ENCODE measurements at regions of chr10 and their contacts with region 1.

Region 1: DNA sequence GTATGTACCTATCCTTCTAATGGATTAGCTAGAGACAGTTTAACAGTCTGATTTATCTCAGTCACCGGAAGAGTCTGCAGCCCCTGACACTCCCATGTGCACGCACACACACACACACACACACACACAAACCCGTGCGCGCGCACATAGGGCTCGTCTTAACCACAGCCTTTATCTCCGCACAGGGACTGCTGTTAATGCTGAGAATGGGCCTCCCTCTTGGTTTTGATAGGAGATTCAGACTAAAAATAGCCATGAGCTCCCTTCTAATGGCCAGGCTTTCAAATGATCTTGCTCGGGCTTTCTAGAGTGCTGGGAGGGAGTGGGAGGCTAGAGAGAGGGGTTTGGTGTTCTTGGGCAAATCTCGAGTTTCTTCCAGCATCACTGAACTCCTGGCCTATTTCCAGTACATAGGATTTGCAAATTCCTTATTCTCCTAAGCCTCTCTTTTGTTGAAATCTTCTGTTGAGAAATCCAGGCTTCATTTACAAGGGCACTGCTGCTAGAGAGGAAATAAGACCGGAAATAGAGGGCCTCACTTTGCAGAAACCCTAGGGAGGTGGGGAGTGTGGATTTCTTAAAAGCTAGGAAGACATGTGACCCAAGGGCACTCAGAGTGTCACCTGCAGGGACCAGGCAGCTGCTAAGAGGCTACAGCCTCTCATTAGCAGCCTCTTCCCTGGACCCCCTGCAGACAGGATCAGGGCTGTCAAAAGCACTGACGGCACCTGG is 2.4 kb downstream of the TMEM72 start:
- DNase-seq: peak in 8 of 9 donors; percentile 19 to 75 (median 58)
- ATAC-seq: peak; percentile 83
- H3K4me3 ChIP-seq: no peak overlapping the region
- H3K4me3 Mint-ChIP-seq: peak overlapping the region; percentile 64 to 83 (median 76)
- H3K27ac ChIP-seq: no peak overlapping the region
- H3K27ac Mint-ChIP-seq: peak overlapping the region; percentile 77 to 90 (median 87)
- H3K4me1 ChIP-seq: peaks cover 0 to 21% of the 10 kb centered on the region in 2 donors
- H3K4me1 Mint-ChIP-seq: peaks cover 12 to 28% (median 23%) of the 10 kb centered on the region in 7 donors
- H3K27me3 ChIP-seq: no peaks in the 10 kb centered on the region
- H3K27me3 Mint-ChIP-seq: peaks cover 0 to 13% (median 5%) of the 10 kb centered on the region in 5 donors

Region 2: DNA sequence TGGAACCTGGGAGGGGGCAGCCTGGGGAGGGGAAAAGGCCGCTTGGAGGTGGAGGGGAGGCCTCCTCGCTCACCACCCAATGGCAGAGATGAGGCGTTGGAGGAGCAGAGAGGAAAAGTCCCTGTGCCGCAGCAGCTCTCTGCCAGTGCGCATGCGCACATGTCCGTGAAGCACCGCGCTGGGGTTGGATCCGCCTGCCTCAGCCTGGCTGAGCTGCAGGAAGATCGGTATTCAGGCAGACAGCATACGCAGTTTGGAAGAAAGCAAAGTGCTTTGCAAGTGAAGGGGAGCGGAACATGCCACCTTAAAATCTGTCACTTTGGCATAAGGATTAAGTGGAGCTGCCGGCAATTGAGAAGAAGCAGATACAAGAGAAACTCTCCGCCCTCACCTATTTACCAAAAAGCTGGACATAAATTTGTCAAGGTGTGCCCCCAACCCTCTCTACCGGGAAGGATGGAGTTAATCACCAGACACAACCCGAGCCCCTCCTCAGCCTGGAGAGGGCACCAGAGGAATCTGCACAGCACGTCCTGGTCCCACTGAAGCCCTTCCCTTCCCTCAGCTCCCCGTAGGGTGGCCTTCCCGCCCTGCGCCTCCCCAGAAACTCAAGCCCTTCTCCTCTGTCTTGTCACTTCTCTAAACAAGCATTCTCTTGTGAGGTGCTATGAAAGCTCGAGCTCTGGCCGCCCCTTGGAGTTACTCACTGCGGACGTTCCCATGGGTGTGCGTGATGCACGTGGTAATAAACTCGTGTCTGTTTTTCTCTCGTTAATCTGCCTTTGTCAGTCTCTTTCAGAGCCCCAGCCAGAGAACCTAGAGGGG is 34.6 kb before region 1 on chr10:
- CTCF ChIA-PET with region 1: no interaction called
- POLR2A ChIA-PET with region 1: interaction called, 8 read pairs
- intact Hi-C with region 1: loop called in 1 of 2 experiments (anchors 2 kb)
- DNase-seq: peak; percentile 63 to 85 (median 81)
- ATAC-seq: peak; percentile 83
- H3K4me3 ChIP-seq: peak overlapping the region; percentile 60
- H3K4me3 Mint-ChIP-seq: peak overlapping the region; percentile 81 to 99 (median 93)
- H3K27ac ChIP-seq: peak overlapping the region; percentile 39
- H3K27ac Mint-ChIP-seq: peak overlapping the region; percentile 56 to 93 (median 88)
- H3K4me1 ChIP-seq: peaks cover 0 to 10% of the 10 kb centered on the region in 2 donors
- H3K4me1 Mint-ChIP-seq: peaks cover 5 to 19% (median 16%) of the 10 kb centered on the region in 7 donors
- H3K27me3 ChIP-seq: no peaks in the 10 kb centered on the region
- H3K27me3 Mint-ChIP-seq: peaks cover 0 to 16% (median 0%) of the 10 kb centered on the region in 5 donors

Region 3: GRCh38 chr10:45198596-45199379 is 285.3 kb after region 1 on chr10:
- CTCF ChIA-PET with region 1: no interaction called
- POLR2A ChIA-PET with region 1: no interaction called
- intact Hi-C with region 1: no loop called
- DNase-seq: no peak
- ATAC-seq: no peak
- H3K4me3 ChIP-seq: no peak overlapping the region
- H3K4me3 Mint-ChIP-seq: no peak overlapping the region
- H3K27ac ChIP-seq: no peak overlapping the region
- H3K27ac Mint-ChIP-seq: no peak overlapping the region
- H3K4me1 ChIP-seq: no peaks in the 10 kb centered on the region
- H3K4me1 Mint-ChIP-seq: no peaks in the 10 kb centered on the region
- H3K27me3 ChIP-seq: no peaks in the 10 kb centered on the region
- H3K27me3 Mint-ChIP-seq: peaks cover 5 to 10% (median 6%) of the 10 kb centered on the region in 5 donors